Activated T-helper 2 cell treated with anti-CD3 and anti-CD28 coated beads, Interferon-gamma antibody, Interleukin-2, Interleukin-4, amounts not matched to agents 10 μg/mL and 5 μg/mL and 100 μg/mL, durations not matched to agents 14 hours and 24 hours and 36 hours (primary cell): ENCODE measurements at regions of chr9 and their contacts with region 1.

Region 1: DNA sequence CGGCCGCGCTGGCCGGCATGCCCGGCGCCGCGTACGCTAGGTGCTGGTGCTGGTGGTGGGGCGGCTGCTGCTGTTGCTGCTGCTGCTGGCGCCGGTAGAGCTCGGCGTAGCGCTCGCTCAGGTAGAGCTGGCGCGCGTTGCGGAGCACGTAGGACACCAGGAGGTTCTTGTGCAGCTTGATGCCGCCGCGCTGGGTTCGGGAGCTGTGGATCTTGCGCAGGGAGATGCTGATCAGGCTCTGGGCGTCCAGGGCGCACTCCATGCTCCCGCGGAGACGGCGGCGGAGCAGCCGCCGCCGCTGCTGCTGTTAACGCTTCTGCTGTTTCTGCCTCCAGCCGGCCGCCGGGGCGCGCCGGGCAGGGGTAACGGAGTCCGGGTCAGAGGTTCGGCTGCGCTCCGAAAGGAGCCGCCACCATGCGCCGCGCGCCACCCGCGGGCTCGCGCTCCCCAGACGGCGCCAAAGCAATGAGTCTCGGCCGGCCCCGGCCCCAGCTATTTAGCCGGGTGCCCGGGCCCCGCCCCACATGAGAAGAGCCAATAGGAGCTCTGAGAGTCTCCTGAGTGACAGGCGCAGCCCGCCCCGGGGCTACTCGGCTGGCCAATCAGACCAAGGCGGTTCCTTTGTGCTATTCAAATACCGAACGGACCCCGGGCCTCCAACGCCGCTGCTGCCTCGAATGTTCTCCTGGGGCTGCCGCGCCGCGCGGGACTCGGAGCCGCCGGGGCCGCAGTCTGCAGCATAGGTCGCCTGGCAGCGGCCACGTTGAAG is at the start of gene IER5L:
- DNase-seq: peak; percentile 93
- H3K4me3 Mint-ChIP-seq: peak within 1 kb of the TSS; percentile 91
- H3K27ac Mint-ChIP-seq: peak within 1 kb of the TSS; percentile 76
- H3K4me1 Mint-ChIP-seq: peaks cover 12% of the 10 kb centered on the region
- H3K27me3 Mint-ChIP-seq: peaks cover 3% of the 10 kb centered on the region
- total RNA-seq, gene IER5L: 8.6 and 9.3 TPM in 2 replicates

Region 2: DNA sequence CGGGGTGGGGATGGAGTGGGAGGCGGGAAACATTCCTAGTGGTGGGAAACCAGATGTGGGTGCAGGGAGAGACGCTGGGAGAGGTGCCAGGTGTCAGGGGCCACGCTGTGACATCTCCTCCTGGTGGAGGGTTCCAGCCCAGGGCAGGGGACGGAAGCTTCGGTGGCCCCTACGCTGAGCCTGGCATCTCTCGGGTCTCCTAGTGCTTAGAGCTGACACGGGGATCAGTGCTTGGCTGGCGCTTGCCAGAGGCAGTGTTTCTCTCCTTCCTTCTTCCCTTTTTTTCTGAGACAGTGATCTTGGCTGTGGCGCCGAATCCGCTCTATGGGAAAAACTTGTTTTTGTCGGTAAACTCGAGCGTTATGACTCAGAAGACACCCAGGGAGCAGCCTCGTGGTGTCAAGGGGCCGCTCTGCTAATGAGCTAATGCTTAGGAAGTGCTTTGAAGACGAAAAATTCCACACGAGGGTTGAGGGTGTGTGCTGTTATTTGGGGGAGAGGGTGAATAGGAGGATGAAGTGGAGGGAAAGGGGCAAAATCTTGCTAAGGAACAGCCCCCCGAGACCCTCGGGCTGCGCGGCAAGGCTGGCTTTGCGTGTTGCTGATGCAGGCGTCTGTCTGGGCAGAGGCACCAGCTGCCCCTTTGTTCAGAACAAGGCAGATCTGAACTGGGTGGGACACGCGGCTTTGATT is 20.5 kb after region 1 on chr9:
- intact Hi-C with region 1: no loop called
- DNase-seq: no peak
- H3K4me3 Mint-ChIP-seq: no peak overlapping the region
- H3K27ac Mint-ChIP-seq: no peak overlapping the region
- H3K4me1 Mint-ChIP-seq: peaks cover 6% of the 10 kb centered on the region
- H3K27me3 Mint-ChIP-seq: peaks cover 10% of the 10 kb centered on the region

Region 3: DNA sequence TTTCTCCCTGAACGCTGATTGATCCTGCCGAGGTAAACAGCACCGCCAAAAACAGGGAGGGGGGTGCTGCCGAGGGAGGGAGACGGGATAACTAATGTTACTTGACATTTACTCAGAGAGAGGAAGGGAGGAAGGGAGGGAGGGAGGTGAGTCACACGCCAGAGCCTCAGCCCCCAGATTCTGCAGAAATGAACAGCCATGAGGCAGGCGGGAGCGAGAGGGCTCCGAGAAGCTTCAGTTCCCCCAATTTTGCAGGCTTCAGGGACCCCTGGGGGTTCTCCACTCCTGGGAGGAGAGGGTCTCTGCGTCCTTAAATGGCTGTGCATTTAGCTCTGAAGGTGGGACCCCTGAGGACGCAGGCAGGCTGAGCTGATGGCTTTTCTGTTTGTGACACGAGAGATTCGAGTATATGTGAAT is 59.2 kb after region 1 on chr9:
- intact Hi-C with region 1: loop called (anchors 2 kb)
- DNase-seq: peak; percentile 25
- H3K4me3 Mint-ChIP-seq: peak overlapping the region; percentile 77
- H3K27ac Mint-ChIP-seq: peak overlapping the region; percentile 89
- H3K4me1 Mint-ChIP-seq: peaks cover 39% of the 10 kb centered on the region
- H3K27me3 Mint-ChIP-seq: no peaks in the 10 kb centered on the region

Region 4: GRCh38 chr9:129320575-129321263 is 142.7 kb after region 1 on chr9:
- intact Hi-C with region 1: loop called (anchors 5 kb)
- DNase-seq: peak; percentile 42
- H3K4me3 Mint-ChIP-seq: peak overlapping the region; percentile 73
- H3K27ac Mint-ChIP-seq: peak overlapping the region; percentile 82
- H3K4me1 Mint-ChIP-seq: peaks cover 20% of the 10 kb centered on the region
- H3K27me3 Mint-ChIP-seq: no peaks in the 10 kb centered on the region

Region 5: GRCh38 chr9:129413537-129414376 is 235.8 kb after region 1 on chr9:
- intact Hi-C with region 1: loop called (anchors 2 kb)
- DNase-seq: peak; percentile 97
- H3K4me3 Mint-ChIP-seq: peak overlapping the region; percentile 78
- H3K27ac Mint-ChIP-seq: peak overlapping the region; percentile 96
- H3K4me1 Mint-ChIP-seq: peaks cover 6% of the 10 kb centered on the region
- H3K27me3 Mint-ChIP-seq: no peaks in the 10 kb centered on the region

Region 6: DNA sequence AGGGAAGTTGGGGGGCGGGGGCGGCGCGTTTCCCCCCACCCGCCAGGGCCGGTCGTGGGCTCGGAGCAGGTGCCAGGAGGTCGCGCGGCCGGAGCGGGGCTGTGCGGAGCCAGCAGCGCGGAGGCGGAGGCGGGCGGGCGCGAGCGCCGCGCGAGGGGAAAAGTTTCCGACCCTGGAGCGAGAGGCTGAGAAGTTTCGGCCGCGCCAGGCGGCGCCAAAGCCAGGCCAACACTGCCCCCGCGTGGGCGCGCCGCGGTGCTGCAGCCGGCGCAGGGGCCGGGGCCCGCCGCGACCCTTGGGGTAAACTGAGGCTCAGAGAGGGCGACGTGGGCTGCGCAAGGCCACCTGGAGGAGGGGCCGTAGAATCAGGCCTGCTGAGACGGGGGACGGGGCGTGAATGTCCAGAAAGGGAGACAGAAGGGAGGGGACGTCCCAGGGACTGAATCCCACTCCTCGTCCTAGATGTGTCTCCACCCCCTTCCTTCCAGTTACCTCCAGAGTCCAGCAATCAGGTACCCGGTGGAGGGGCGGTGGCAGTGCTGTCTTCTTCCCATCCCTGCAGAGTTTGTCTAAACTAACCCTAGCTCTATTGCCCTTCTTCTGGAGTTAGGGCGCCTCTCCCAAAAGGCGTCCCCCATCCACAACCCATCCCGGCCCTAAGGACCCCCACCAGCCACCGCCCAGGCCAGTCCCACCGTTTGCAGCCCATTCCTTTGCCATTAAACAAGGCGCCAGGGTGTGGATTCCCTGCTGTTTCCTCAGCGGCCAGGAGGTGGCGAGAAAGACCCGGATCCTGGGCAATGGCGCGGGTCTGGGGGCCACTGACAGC is 432.7 kb after region 1 on chr9:
- intact Hi-C with region 1: loop called (anchors 2 kb)
- DNase-seq: peak; percentile 65
- H3K4me3 Mint-ChIP-seq: peak overlapping the region; percentile 80
- H3K27ac Mint-ChIP-seq: peak overlapping the region; percentile 70
- H3K4me1 Mint-ChIP-seq: peaks cover 25% of the 10 kb centered on the region
- H3K27me3 Mint-ChIP-seq: no peaks in the 10 kb centered on the region